Pancreas (tissue), 10 donors: ENCODE measurements at regions of chr2 and their contacts with region 1.

Region 1: DNA sequence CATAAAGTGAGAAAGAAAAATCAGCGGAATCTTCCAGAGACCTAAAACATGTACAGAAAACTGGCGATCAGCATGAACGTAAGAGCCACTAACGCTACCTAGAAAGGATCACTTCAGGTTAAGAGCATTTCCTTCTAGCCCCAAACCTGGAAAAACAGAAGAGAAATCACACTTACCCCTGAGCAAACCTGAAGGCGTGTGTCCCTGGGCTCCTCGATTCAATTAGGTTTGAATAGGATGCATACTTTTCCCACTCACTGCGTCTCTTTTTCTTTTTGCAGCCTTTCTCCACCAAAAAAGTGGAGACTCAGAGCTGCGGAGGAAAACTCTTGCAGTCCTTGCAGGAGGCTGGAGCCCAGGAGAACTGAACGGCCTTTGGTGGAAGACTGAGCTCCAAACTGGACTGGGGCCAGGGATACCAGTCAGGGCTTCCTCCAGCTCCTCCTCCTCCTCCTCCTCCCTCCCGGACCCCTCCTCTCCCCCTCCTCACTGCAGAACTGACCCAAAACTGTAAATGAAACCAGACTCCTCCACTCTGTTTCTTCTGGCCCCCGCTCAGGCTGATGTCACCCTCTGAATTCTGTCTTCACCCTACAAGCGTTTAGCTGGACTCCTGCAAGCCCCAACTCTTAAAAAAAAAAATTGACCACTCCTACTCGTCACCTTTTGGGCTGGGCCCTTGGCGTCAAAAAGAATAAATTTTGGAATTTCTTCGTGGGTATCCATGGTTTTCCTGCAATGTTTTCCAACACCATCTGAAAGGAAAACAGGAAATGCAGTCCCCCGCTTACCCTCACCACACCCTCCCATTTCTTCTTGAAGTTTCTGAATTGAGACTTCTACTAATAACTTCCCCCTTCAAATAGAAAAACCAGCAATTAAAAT is at the start of gene COL6A3:
- DNase-seq: peak in 2 of 6 donors; percentile 19 to 35
- ATAC-seq: peak in 3 of 4 donors; percentile 49 to 56 (median 55)
- H3K4me3 ChIP-seq: peak within 1 kb of the TSS in 2 of 4 donors; percentile 10 to 22
- H3K27ac ChIP-seq: peak within 1 kb of the TSS in 2 of 4 donors; percentile 36 to 44
- H3K4me1 ChIP-seq: no peaks in the 10 kb centered on the region
- H3K27me3 ChIP-seq: no peaks in the 10 kb centered on the region
- CTCF ChIP-seq: no peak
- total RNA-seq, gene COL6A3: 9.7 to 249 (median 53.5) TPM

Region 2: GRCh38 chr2:237165405-237166276 is 248.4 kb before region 1 on chr2:
- intact Hi-C with region 1: loop called in 1 of 3 experiments (anchors 10 kb)
- DNase-seq: no peak
- ATAC-seq: peak in 1 of 4 donors; percentile 60
- H3K4me3 ChIP-seq: no peak overlapping the region
- H3K27ac ChIP-seq: no peak overlapping the region
- H3K4me1 ChIP-seq: no peaks in the 10 kb centered on the region
- H3K27me3 ChIP-seq: no peaks in the 10 kb centered on the region
- CTCF ChIP-seq: peak in 1 of 4 donors; percentile 16

Region 3: DNA sequence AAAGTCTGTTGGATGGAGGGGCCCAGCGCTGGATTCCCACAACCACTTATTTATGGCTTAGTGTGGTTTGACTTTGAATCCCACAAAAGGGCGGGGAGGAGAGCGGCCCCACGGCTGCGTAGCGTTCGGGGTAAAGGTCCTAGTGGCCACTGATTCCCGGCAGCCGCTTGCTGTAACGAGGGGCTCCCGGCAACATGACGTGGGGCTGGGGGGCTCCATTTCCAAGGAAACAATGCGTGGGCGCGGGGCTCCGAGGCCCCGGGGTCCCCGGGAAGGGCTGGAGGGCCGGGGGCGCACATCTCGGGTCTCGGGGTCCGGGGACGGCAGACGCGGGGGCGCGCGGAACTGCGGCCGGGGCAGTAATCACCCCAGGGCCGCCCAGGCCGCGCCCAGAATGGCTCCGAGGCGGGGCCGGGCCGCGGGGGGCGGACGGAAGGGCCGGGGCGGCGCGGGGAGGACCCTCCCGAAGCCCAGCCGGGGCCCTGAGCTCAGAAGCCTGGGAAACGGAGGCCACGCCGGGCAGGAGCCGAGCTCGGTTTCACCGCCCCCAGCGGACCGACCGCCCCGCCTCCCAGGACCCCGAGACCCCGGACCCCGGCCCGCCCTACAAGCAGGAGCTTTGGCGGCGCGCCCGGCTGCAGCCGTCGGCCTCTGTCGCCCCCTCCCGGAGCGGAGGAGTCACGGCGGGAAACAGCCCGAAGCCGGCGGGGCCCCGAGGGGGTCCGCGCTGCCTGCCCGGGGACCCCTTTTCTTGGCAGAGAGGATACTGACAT is 61.1 kb after region 1 on chr2:
- intact Hi-C with region 1: loop called in 1 of 3 experiments (anchors 10 kb)
- DNase-seq: peak; percentile 68 to 95 (median 85)
- ATAC-seq: peak; percentile 87 to 92 (median 89)
- H3K4me3 ChIP-seq: peak overlapping the region; percentile 42 to 83 (median 70)
- H3K27ac ChIP-seq: peak overlapping the region; percentile 81 to 94 (median 86)
- H3K4me1 ChIP-seq: peaks cover 0 to 18% (median 16%) of the 10 kb centered on the region in 3 donors
- H3K27me3 ChIP-seq: no peaks in the 10 kb centered on the region
- CTCF ChIP-seq: peak; percentile 73 to 93 (median 82)